ENCODE measurements at regions of chr7 and their contacts with region 1.

Region 1: DNA sequence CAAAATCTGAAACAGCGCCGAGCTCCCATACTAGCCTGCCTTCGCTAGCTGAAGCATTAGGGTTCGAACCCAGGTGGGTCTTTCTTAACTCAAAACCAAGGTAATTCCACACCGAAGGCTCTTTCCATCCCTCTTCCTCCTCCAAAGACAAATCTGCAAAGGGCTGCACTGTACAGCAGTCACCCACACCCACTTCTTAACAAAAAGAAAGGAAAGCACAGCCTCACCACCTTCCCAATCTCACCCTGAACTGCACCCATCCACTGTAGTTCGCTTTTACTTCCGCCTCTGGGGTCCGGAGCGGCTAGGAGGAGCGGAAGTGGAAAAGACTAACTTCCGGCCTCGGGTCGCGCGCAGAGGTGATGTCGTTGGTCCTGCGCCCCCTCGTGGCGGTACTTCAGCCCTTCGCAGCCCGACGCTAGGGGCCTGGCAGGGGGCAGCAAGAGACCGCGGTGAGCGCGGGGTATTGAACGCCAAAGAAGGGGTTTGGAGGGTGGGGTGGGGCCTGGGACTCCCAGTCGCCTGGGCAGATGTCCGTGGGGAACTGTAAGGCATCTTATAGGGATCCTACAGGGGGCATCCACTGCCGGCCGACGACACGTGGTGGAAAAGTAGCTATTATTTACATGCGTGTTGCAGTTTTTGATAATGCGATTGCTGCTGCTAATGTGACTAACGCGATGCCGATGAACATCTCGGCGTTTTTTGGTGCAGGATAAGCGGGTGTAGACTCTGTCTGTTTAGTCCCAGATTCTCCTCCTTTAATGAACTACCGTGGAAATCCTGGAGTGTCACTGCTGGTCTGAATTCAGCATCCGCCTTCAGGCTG is at the start of gene MTERF1:
- DNase-seq: peak; percentile 88 to 98 (median 90)
- ATAC-seq: peak; percentile 98
- H3K4me3 ChIP-seq: peak within 1 kb of the TSS; percentile 83
- H3K27ac ChIP-seq: peak within 1 kb of the TSS; percentile 79
- H3K4me1 ChIP-seq: peaks cover 0 to 4% of the 10 kb centered on the region in 2 experiments; a peak in 2 of 5 replicates
- H3K27me3 ChIP-seq: no peaks in the 10 kb centered on the region
- CTCF ChIP-seq: peak; percentile 99 to 100 (median 100)
- EP300 ChIP-seq: 0 out of 2 replicates have a peak, but pooled peaks have one; percentile 24
- POLR2A ChIP-seq: peak; percentile 98
- RAD21 ChIP-seq: peak; percentile 97 to 99
- polyA plus RNA-seq, gene MTERF1: 45.8 to 49.2 TPM

Region 2: DNA sequence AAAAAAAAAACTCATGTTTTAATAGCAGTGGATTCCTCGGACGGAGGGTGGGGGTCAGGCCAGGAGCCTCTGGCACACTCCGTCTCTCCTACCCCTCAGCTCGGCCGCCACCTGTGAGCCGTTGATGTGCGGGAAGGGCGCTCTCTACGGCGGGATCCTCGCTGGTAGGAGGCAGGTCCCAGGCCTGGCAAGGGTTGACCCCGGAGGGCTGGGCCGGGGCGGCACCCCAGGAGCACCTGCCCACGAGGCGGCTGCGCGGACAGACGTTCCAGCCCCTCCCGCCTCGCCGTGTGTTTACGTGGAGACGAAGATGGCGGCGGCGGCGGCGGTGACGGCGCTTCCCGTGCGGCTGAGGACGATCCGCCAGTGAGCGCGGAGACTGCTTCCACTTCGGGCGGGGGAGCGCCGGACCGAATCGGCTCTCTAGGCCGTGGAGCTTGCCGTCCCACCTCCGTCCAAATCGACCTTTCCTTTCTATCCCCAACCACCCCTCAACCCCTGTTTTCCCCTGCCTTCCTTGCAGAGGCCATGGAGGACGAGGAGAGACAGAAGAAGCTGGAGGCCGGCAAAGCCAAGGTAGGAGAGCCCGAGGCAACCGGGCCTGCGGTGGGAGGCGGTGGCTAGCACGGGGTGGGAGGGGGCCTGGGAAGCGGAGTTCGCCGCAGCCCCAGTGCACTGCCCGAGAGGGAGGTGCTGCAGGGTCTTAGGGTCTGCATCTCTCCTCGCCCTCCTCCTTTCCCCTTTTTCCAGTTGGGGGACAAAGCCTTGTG is 60.1 kb after region 1 on chr7 and contains the start of gene AKAP9:
- CTCF ChIA-PET with region 1: interaction called, 3 read pairs
- POLR2A ChIA-PET with region 1: no interaction called
- in situ Hi-C with region 1: no loop called
- intact Hi-C with region 1: loop called (anchors 5 kb)
- DNase-seq: peak; percentile 91 to 95 (median 91)
- ATAC-seq: peak; percentile 92
- H3K4me3 ChIP-seq: peak within 1 kb of the TSS; percentile 87
- H3K27ac ChIP-seq: peak within 1 kb of the TSS; percentile 95
- H3K4me1 ChIP-seq: peaks cover 2 to 5% of the 10 kb centered on the region in 2 experiments; a peak in 2 of 5 replicates
- H3K27me3 ChIP-seq: no peaks in the 10 kb centered on the region
- CTCF ChIP-seq: peak in 1 of 3 experiments; percentile 13; a peak in 1 of 6 replicates
- EP300 ChIP-seq: no peak
- POLR2A ChIP-seq: peak; percentile 96
- RAD21 ChIP-seq: no peak; a peak in 1 of 4 replicates
- polyA plus RNA-seq, gene AKAP9: 25.5 to 49.4 TPM

Region 3: DNA sequence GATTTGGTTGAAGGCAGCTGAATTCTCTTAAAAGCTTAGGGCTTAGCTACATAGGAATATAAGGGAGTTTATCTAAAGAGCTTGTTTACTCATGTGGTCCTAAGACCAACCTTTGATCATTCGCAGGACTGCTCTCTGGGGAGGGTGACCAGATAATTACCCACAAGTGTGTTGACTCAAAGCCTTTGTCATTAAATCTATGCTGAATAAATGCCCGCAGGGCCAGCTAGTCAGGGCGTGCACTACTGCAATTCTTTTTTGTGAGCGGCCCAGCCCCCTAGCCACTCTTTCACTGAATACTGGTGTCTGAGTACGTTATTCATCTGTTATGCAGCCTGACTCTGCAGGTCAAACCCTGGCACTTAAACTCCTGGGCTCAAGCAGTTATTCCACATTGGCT is 129.6 kb after region 1 on chr7:
- CTCF ChIA-PET with region 1: no interaction called
- POLR2A ChIA-PET with region 1: no interaction called
- in situ Hi-C with region 1: no loop called
- intact Hi-C with region 1: no loop called
- DNase-seq: no peak
- ATAC-seq: no peak
- H3K4me3 ChIP-seq: no peak overlapping the region
- H3K27ac ChIP-seq: no peak overlapping the region
- H3K4me1 ChIP-seq: no peaks in the 10 kb centered on the region
- H3K27me3 ChIP-seq: no peaks in the 10 kb centered on the region
- CTCF ChIP-seq: no peak
- EP300 ChIP-seq: no peak
- POLR2A ChIP-seq: no peak
- RAD21 ChIP-seq: no peak

Region 4: GRCh38 chr7:92044940-92045339 is 164.3 kb after region 1 on chr7:
- CTCF ChIA-PET with region 1: interaction called, 4 read pairs
- POLR2A ChIA-PET with region 1: no interaction called
- in situ Hi-C with region 1: no loop called
- intact Hi-C with region 1: loop called (anchors 5 kb)
- DNase-seq: no peak
- ATAC-seq: no peak
- H3K4me3 ChIP-seq: no peak overlapping the region
- H3K27ac ChIP-seq: no peak overlapping the region
- H3K4me1 ChIP-seq: peaks cover 0 to 8% of the 10 kb centered on the region in 2 experiments; a peak in 2 of 5 replicates
- H3K27me3 ChIP-seq: no peaks in the 10 kb centered on the region
- CTCF ChIP-seq: no peak
- EP300 ChIP-seq: no peak
- POLR2A ChIP-seq: no peak
- RAD21 ChIP-seq: no peak

Region 5: DNA sequence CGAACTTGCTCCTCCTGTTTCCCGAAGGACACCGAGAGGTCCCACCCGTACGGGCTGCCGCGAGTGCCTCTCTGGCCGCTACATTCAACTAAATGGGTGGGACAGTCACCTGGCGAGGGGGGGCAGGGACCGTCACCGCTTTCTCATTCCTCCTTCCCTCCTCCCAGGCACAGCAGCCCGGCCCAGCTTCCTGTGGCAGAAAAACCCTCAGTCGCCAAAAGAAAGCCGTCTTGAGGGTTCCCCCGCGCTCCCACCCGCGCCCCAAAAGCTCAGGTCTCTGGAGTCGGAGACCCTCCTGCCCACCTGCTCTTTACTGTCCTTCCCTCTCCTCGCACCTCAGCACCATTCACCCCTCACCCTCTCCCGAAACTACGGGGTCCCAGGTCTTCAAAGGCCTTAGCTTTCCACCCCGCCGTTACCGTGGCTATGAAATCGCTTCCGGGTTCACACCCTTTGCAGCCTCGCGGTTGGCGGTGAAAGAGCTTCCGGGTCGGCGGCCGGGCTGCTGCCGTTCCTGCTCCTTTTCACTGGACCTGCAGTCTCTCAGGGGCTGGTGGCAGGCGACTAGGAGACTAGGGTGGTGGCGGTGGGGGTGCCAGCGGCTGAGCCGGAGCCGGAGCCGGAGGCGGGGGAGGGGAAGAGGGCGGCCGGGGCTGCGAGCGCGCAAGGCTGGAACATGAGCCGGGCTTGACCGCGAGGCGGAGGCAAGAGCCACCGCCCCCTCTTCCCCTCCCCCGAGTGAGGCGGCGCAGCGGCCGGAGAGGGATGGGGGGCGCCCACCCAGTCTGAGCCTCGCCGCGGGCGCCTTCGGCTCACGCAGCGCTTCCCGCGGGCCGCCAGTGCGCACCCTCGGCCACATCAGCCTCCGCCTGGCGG is 365.1 kb after region 1 on chr7 and contains the starts of genes ANKIB1 and KRIT1:
- CTCF ChIA-PET with region 1: no interaction called
- POLR2A ChIA-PET with region 1: no interaction called
- in situ Hi-C with region 1: no loop called
- intact Hi-C with region 1: loop called (anchors 10 kb)
- DNase-seq: peak; percentile 90 to 95 (median 94)
- ATAC-seq: peak; percentile 87
- H3K4me3 ChIP-seq: peak within 1 kb of the TSS; percentile 59
- H3K27ac ChIP-seq: peak within 1 kb of the TSS; percentile 92
- H3K4me1 ChIP-seq: peaks cover 0 to 8% of the 10 kb centered on the region in 2 experiments; a peak in 3 of 5 replicates
- H3K27me3 ChIP-seq: no peaks in the 10 kb centered on the region
- CTCF ChIP-seq: peak in 2 of 3 experiments; percentile 15 to 43; a peak in 2 of 6 replicates
- EP300 ChIP-seq: no peak
- POLR2A ChIP-seq: peak; percentile 98
- RAD21 ChIP-seq: peak in 1 of 2 experiments; percentile 14; a peak in 2 of 4 replicates
- polyA plus RNA-seq, gene ANKIB1: 5.9 to 7.4 TPM
- polyA plus RNA-seq, gene KRIT1: 21.5 to 21.7 TPM

Region 6: DNA sequence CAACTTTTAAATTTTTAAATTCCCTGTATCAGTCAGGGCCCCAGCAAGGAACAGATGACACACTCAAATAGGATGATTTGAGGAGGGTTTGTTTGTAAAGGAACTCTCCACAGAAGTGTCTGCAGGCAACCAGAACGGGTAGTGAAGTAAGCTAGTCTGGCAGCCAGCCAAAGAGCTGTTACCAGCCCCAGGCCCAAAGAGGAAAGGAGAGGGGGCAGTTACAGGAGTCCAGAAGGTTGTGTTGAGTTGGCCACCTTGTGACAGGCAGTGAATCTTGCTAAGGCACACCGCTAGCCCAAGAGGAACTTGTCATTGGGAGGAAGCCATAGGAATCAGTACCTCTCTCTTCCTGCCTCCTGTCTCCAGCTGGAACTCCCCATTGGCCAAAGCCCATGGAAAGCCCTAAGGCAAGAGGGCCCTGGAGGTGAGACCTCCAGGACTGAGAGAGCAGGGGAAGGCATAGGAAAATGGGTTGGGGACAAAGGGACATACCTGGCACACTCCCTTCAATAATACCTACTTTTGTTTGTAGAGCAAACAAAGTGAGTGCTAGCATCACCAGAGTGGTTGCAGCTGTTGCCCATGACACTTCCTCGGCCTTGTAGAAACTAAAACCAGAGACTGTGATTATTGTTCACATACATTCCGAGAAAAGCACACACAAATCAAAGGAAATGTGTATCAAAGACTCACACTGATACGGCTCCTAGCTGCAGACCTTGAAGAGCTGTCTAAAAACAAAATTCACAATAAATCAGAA is 541.2 kb after region 1 on chr7:
- CTCF ChIA-PET with region 1: interaction called, 5 read pairs
- POLR2A ChIA-PET with region 1: no interaction called
- in situ Hi-C with region 1: no loop called
- intact Hi-C with region 1: loop called (anchors 2 kb)
- DNase-seq: peak in 3 of 4 experiments; percentile 26 to 59 (median 33)
- ATAC-seq: no peak
- H3K4me3 ChIP-seq: no peak overlapping the region
- H3K27ac ChIP-seq: no peak overlapping the region
- H3K4me1 ChIP-seq: peaks cover 14 to 20% of the 10 kb centered on the region in 2 experiments
- H3K27me3 ChIP-seq: no peaks in the 10 kb centered on the region
- CTCF ChIP-seq: no peak
- EP300 ChIP-seq: no peak
- POLR2A ChIP-seq: no peak
- RAD21 ChIP-seq: no peak

Region 7: GRCh38 chr7:92461027-92462003 is 580.7 kb after region 1 on chr7:
- CTCF ChIA-PET with region 1: interaction called, 4 read pairs
- POLR2A ChIA-PET with region 1: interaction called, 3 read pairs
- in situ Hi-C with region 1: no loop called
- intact Hi-C with region 1: loop called (anchors 2 kb)
- DNase-seq: peak; percentile 53 to 75 (median 65)
- ATAC-seq: peak; percentile 93
- H3K4me3 ChIP-seq: no peak overlapping the region
- H3K27ac ChIP-seq: peak overlapping the region; percentile 22; the same call in 2 of the 3 replicates
- H3K4me1 ChIP-seq: peaks cover 0 to 4% of the 10 kb centered on the region in 2 experiments; a peak in 2 of 5 replicates
- H3K27me3 ChIP-seq: no peaks in the 10 kb centered on the region
- CTCF ChIP-seq: peak; percentile 72 to 92 (median 92)
- EP300 ChIP-seq: no peak
- POLR2A ChIP-seq: no peak
- RAD21 ChIP-seq: peak; percentile 48 to 69

Measured in K562 (cell line).